HCT116 (cell line): ENCODE measurements at regions of chr11 and their contacts with region 1.

Region 1: GRCh38 chr11:95067039-95067840 is 521 bp downstream of the SRSF8 start:
- DNase-seq: no peak
- ATAC-seq: peak; percentile 75
- H3K4me3 ChIP-seq: peak overlapping the region; percentile 69 to 84
- H3K27ac ChIP-seq: peak overlapping the region; percentile 96
- H3K4me1 ChIP-seq: peaks cover 14 to 16% of the 10 kb centered on the region in 2 experiments
- H3K27me3 ChIP-seq: no peaks in the 10 kb centered on the region
- CTCF ChIP-seq: peak; percentile 21 to 43 (median 39); a peak in 4 of 6 replicates
- POLR2A ChIP-seq: peak; percentile 80
- RAD21 ChIP-seq: peak; percentile 27

Region 2: DNA sequence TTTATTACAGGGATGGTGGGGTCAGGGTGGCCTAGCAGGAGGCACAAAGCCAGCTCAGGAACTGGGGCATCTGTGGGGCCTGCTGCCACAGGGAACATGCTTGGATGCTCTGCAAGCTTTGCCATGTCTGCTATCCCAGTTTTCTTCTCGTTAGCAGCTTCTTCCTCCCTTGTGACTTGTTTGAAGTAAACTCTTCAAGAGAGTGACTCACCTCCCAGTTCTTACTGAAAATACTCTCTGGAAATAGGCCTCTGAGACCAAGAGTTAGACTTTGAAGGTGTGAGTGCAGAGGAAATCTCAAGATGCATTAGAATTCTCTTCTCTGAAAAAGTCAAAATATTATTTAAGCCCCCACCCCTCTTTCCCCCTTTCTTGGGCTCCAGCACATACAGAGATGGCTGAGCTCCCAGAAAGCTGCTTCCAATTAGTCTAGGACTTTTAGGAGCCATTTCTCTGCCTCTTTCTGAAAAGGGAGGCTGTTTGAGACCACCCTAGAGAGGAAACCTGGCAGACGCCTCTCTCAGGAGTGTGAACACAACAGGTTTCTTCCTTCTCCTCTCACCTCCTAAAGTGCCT is 109.0 kb before region 1 on chr11:
- CTCF ChIA-PET with region 1: no interaction called
- POLR2A ChIA-PET with region 1: no interaction called
- RAD21 ChIA-PET with region 1: no interaction called
- intact Hi-C with region 1: no loop called
- DNase-seq: no peak
- ATAC-seq: no peak
- H3K4me3 ChIP-seq: no peak overlapping the region
- H3K27ac ChIP-seq: no peak overlapping the region
- H3K4me1 ChIP-seq: no peaks in the 10 kb centered on the region
- H3K27me3 ChIP-seq: no peaks in the 10 kb centered on the region
- CTCF ChIP-seq: no peak
- POLR2A ChIP-seq: no peak
- RAD21 ChIP-seq: no peak

Region 3: DNA sequence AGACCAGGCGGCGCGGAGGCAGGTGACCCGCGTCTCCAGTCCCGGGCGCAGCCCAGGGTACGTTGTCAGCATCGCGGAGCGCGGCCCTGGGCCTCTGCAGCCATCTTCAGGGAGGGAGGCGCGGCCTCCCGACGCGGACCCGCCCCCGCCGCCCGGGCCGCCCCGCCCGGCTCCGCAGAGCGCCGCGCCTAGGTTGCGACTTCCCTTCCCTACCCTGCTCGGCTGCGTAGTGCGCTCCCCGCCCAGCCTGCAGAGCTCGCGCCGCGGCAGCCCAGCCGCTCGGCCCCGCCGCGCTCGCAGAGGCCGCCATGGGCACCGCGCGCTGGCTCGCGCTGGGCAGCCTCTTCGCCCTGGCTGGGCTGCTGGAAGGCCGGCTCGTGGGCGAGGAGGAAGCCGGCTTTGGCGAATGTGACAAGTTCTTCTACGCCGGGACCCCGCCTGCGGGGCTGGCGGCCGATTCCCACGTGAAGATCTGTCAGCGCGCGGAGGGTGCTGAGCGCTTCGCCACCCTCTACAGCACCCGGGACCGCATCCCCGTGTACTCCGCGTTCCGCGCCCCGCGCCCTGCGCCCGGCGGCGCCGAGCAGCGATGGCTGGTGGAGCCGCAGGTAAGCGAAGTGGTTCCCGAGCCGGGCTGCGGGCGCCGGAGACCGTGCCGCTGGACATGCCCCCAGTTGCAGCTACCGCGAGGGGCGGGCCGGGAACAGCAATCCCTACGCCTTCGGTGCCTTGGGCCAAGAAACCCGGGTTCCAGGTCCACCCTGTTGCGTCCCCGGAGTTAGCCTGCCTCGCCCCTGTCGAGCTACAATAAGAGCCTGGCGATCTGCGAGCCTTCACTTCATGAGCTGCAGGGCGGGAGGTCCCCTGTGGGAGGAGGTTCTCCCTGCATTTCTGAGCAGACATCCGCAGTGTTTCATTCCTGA is 22.6 kb after region 1 on chr11 and contains the start of gene ENDOD1:
- CTCF ChIA-PET with region 1: interaction called, 23 read pairs
- POLR2A ChIA-PET with region 1: interaction called, 28 read pairs
- RAD21 ChIA-PET with region 1: no interaction called
- intact Hi-C with region 1: loop called (anchors 2 kb)
- DNase-seq: no peak
- ATAC-seq: peak; percentile 90
- H3K4me3 ChIP-seq: peak within 1 kb of the TSS; percentile 69 to 82
- H3K27ac ChIP-seq: peak within 1 kb of the TSS; percentile 69
- H3K4me1 ChIP-seq: peaks cover 40 to 54% of the 10 kb centered on the region in 2 experiments
- H3K27me3 ChIP-seq: no peaks in the 10 kb centered on the region
- CTCF ChIP-seq: 0 out of 6 replicates have a peak, but pooled peaks of 1 of the 3 experiments have one; percentile 6
- POLR2A ChIP-seq: peak; percentile 90
- RAD21 ChIP-seq: no peak
- total RNA-seq, gene ENDOD1: 33.6 TPM

Region 4: GRCh38 chr11:95108159-95108611 is 40.9 kb after region 1 on chr11:
- CTCF ChIA-PET with region 1: no interaction called
- POLR2A ChIA-PET with region 1: interaction called, 6 read pairs
- RAD21 ChIA-PET with region 1: interaction called in 1 of 2 experiments, 3 read pairs
- intact Hi-C with region 1: loop called (anchors 5 kb)
- DNase-seq: no peak
- ATAC-seq: peak; percentile 74
- H3K4me3 ChIP-seq: peak overlapping the region; percentile 43 to 55
- H3K27ac ChIP-seq: peak overlapping the region; percentile 89
- H3K4me1 ChIP-seq: peaks cover 64 to 87% of the 10 kb centered on the region in 2 experiments
- H3K27me3 ChIP-seq: no peaks in the 10 kb centered on the region
- CTCF ChIP-seq: no peak
- POLR2A ChIP-seq: no peak
- RAD21 ChIP-seq: no peak

Region 5: DNA sequence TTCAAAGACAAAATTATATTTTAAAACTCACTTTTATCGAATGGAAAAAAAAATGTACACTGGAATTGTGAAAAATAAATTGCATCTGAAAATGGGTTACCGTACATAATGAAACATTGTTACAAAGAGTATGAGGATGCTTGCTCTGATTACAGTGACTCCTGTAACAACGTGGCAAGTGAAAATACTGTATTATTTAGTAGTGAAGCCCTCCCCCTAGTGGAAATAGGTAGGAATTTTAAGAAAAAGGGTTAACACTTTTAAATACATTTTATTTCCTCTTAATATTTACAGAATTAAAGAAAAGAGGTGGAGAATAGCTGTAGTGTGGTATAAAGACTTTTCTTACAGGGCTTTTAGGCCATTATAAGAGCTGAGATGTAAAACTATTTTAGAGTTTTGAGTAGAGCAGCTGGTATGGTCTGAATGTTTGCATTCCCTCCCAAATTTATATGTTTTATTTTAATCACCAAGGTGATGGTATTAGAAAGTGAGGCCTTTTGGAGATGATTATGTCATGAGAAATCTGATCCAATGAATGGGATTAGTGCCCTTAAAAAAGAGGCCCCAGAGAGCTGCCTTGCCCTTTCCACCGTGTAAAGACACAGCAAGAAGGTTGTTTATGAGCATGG is 697.1 kb after region 1 on chr11:
- CTCF ChIA-PET with region 1: no interaction called
- POLR2A ChIA-PET with region 1: no interaction called
- RAD21 ChIA-PET with region 1: no interaction called
- intact Hi-C with region 1: loop called (anchors 5 kb)
- DNase-seq: peak; percentile 27
- ATAC-seq: peak; percentile 72; the same call in 1 of the 2 replicates
- H3K4me3 ChIP-seq: no peak overlapping the region
- H3K27ac ChIP-seq: no peak overlapping the region
- H3K4me1 ChIP-seq: no peaks in the 10 kb centered on the region
- H3K27me3 ChIP-seq: no peaks in the 10 kb centered on the region
- CTCF ChIP-seq: peak; percentile 42 to 79 (median 66); a peak in 5 of 6 replicates
- POLR2A ChIP-seq: no peak
- RAD21 ChIP-seq: peak; percentile 81

Region 6: GRCh38 chr11:95790123-95790932 is 723.1 kb after region 1 on chr11 and contains the start of gene CEP57:
- CTCF ChIA-PET with region 1: no interaction called
- POLR2A ChIA-PET with region 1: interaction called, 4 read pairs
- RAD21 ChIA-PET with region 1: no interaction called
- intact Hi-C with region 1: loop called (anchors 5 kb)
- DNase-seq: peak; percentile 97
- ATAC-seq: peak; percentile 78
- H3K4me3 ChIP-seq: peak within 1 kb of the TSS; percentile 76 to 87
- H3K27ac ChIP-seq: peak within 1 kb of the TSS; percentile 77
- H3K4me1 ChIP-seq: peaks cover 9 to 18% of the 10 kb centered on the region in 2 experiments; a peak in 3 of 4 replicates
- H3K27me3 ChIP-seq: no peaks in the 10 kb centered on the region
- CTCF ChIP-seq: no peak
- POLR2A ChIP-seq: peak; percentile 73
- RAD21 ChIP-seq: no peak
- total RNA-seq, gene CEP57: 43.3 TPM

Region 7: DNA sequence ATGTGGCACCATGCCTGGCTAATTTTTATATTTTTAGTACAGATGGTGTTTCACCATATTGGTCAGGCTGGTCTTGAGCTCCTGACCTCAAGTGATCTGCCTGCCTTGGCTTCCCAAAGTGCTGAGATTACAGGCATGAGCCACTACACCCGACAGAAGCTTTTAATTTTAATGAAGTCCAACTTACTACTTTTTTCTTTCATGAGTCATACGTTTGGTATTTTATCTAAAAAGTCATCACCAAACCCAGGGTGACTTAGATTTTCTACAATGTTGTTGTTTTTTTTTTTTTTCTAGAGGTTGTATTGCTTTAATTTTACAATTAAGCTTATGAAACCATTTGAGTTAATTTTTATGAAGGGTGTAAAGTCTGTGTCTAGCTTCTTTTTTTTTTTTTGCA is 1357.5 kb after region 1 on chr11:
- CTCF ChIA-PET with region 1: no interaction called
- POLR2A ChIA-PET with region 1: no interaction called
- RAD21 ChIA-PET with region 1: interaction called in 1 of 2 experiments, 5 read pairs
- intact Hi-C with region 1: loop called (anchors 5 kb)
- DNase-seq: no peak
- ATAC-seq: no peak
- H3K4me3 ChIP-seq: no peak overlapping the region
- H3K27ac ChIP-seq: no peak overlapping the region
- H3K4me1 ChIP-seq: 0 out of 4 replicates have a peak, but pooled peaks cover 0 to 3% of the 10 kb centered on the region in 2 experiments
- H3K27me3 ChIP-seq: no peaks in the 10 kb centered on the region
- CTCF ChIP-seq: no peak
- POLR2A ChIP-seq: no peak
- RAD21 ChIP-seq: no peak